Esophagus muscularis mucosa (tissue), 4 donors: ENCODE measurements at regions of chr15 and their contacts with region 1.

Region 1: DNA sequence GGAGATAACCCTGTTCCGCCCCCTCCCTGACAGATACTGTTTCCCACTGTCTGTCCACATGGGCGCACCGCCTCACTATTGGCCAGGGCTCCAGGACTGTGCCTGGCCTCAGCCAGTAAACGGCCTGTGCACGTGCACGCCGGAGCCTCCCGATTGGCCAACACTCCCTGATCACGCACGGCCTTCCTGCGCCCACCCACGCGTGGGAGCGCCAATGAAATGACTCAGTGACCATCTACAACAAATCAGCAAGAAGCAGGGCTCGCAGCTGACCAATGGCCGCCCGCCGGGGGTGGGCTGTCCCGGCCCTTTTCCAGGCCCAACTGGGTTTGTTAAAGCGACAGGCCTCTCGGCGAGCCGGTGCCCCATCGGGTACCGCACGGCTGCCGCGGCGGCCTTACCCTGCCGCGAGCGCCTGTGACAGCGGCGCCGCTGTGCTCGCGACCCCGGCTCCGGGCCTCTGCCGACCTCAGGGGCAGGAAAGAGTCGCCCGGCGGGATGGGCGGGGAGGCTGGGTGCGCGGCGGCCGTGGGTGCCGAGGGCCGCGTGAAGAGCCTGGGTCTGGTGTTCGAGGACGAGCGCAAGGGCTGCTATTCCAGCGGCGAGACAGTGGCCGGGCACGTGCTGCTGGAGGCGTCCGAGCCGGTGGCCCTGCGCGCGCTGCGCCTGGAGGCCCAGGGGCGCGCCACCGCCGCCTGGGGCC is at the start of gene ARRDC4:
- DNase-seq: peak; percentile 100
- H3K4me3 ChIP-seq: peak within 1 kb of the TSS; percentile 93 to 100 (median 98)
- H3K27ac ChIP-seq: peak within 1 kb of the TSS; percentile 93 to 99 (median 98)
- H3K4me1 ChIP-seq: peaks cover 27 to 51% (median 43%) of the 10 kb centered on the region in 4 donors
- H3K27me3 ChIP-seq: no peaks in the 10 kb centered on the region
- CTCF ChIP-seq: peak in 1 of 3 experiments; percentile 22
- EP300 ChIP-seq: no peak
- POLR2A ChIP-seq: peak; percentile 65
- total RNA-seq, gene ARRDC4: 115 to 135 (median 128) TPM

Region 2: DNA sequence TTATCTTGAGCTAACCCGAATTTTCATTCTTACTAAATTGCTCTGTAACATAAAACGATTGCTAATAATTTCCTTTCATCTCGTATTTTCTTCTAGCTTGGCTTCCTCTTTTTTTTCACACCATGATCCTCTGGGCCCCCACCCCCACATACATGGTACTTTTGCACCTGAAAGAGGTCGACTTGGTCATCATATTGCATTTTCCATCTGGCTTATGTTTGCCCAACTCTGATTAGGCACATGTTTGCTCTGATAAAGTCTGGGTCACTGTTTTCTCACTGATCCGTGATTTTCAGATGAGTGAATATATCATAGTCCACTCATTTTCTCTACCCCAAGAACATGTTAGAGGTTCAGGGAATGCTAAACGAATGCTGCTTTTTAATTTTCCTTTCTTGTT is 49.5 kb after region 1 on chr15:
- intact Hi-C with region 1: loop called (anchors 5 kb)
- DNase-seq: no peak
- H3K4me3 ChIP-seq: no peak overlapping the region
- H3K27ac ChIP-seq: peak overlapping the region in 2 of 4 donors; percentile 3 to 82
- H3K4me1 ChIP-seq: peaks cover 0 to 17% (median 14%) of the 10 kb centered on the region in 4 donors
- H3K27me3 ChIP-seq: no peaks in the 10 kb centered on the region
- CTCF ChIP-seq: no peak
- EP300 ChIP-seq: no peak
- POLR2A ChIP-seq: no peak